H1 (cell line): ENCODE measurements at regions of chr15 and their contacts with region 1.

Region 1: DNA sequence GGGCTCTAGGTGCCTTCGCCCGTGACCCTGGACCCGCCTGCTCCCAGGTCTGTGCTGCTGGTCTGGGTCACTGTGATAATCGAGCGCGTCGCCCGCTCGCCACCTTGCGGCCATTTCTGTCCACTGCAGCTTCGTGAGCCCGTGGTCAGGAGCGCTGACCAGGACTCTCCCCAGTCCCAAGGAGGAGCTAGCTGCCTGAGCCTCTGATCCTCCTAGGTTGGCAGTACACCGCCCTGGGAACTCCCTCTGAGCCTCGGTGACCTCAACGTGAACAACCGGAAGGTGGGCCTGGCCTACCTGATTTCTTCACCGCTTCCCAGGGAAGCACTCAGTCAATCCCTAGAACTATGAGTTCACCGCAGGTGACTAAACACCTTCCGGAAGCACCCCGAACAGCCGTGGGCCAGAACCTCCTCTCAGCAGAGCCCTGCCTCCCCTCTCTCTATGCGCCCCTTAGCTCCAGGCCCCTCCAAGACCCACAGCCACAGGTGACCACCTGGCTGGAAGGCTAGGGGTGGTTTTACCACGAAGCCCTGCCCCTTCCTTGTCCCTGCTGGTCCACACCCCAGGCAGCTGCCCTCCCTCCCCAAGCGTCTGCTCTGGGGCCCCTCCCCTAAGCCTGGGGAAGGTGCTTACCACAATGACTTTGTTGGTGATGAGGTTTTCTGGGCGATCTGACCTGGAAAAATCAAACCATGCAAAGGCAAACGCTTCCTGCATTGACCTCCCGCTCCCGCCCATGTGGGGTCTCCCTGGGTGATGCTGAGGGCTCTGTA is 9.7 kb downstream of the PLA2G4D start:
- DNase-seq: peak; percentile 65 to 91
- H3K4me3 ChIP-seq: no peak overlapping the region
- H3K27ac ChIP-seq: no peak overlapping the region
- H3K4me1 ChIP-seq: peaks cover 6 to 17% (median 11%) of the 10 kb centered on the region in 4 experiments
- H3K27me3 ChIP-seq: no peaks in the 10 kb centered on the region
- CTCF ChIP-seq: peak; percentile 93 to 99 (median 97)
- EP300 ChIP-seq: no peak
- POLR2A ChIP-seq: no peak
- RAD21 ChIP-seq: peak; percentile 88 to 91

Region 2: DNA sequence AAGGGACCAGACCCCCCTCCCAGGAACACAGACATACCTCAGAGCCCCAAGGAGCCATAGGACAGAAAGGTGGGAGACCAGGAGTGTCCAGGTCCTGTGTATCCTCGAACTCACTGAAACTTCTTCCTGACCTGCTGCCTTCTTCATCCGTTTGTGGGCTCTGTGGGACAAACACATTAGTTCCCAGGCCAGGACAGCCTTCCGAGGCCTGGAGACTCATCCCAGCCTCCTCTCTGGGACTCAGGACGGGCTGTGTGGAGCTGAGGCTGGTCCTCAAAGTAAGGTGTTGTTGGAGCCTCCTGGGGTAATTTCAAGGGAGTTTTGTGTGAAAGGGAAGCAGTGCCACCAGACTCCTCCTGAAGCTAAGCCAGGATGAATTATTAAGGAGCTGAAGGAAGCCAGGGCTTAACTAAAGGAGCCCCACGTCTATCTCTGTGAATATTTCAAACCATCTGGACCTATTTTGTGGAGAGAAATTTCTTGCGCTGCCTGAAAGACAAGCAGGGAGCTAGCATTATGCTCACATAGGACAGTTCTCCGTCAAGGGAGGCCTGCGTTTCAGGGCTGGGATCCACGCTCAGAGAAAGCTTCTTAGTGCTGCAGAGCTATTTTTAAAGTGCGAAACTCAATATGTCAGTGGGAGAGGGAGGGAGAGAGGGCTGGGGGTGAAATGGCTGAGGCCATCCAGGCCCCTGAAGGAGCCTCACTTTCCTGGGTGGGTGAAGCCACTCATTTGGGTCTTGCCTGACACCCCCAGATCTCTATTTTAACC is 34.0 kb before region 1 on chr15:
- CTCF ChIA-PET with region 1: interaction called, 28 read pairs
- POLR2A ChIA-PET with region 1: no interaction called
- DNase-seq: peak in 1 of 2 experiments; percentile 28
- H3K4me3 ChIP-seq: no peak overlapping the region
- H3K27ac ChIP-seq: no peak overlapping the region
- H3K4me1 ChIP-seq: peaks cover 0 to 6% (median 3%) of the 10 kb centered on the region in 4 experiments; a peak in 5 of 7 replicates
- H3K27me3 ChIP-seq: no peaks in the 10 kb centered on the region
- CTCF ChIP-seq: no peak
- EP300 ChIP-seq: no peak
- POLR2A ChIP-seq: no peak
- RAD21 ChIP-seq: no peak

Region 3: DNA sequence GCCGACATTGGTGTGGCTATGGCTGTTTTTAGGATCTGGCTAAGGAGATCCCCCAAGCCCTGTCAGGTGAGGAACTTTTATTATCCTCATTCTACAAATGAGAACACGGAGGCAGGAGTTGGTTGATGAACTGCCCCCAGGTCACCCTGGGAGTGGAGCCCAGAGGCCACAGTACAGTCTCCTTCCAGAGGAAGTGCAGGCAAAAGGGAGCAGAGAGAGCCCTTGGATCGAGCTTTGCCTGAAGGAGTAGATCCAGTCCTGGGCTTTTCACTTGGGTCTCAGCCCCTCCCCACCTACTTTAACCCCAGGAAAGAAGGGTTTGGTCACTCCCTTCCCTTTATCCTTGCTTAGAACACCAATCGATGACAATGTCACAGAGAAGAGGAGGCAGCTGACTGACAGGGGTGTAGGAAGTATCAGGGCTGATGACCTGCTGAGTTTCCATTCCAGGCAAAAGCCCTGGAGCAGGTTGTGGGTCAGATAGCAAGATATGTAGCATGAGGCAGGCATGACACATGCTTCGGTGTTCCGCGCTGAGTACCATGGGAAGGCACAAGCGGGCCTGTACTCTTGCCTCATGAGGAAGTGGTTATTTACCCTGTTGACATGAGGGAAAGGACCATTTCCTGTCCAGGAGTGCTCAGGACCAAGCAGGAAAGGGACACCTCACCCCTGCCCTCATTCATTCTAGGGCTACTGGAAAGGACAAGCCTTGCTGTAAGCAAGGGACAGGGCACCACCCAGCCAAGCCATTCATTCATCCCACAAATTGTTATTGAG is 15.6 kb after region 1 on chr15:
- CTCF ChIA-PET with region 1: interaction called, 63 read pairs
- POLR2A ChIA-PET with region 1: interaction called, 4 read pairs
- DNase-seq: no peak
- H3K4me3 ChIP-seq: no peak overlapping the region
- H3K27ac ChIP-seq: no peak overlapping the region
- H3K4me1 ChIP-seq: no peaks in the 10 kb centered on the region; a peak in 1 of 7 replicates
- H3K27me3 ChIP-seq: no peaks in the 10 kb centered on the region; a peak in 1 of 7 replicates
- CTCF ChIP-seq: no peak
- EP300 ChIP-seq: no peak
- POLR2A ChIP-seq: no peak
- RAD21 ChIP-seq: no peak

Region 4: DNA sequence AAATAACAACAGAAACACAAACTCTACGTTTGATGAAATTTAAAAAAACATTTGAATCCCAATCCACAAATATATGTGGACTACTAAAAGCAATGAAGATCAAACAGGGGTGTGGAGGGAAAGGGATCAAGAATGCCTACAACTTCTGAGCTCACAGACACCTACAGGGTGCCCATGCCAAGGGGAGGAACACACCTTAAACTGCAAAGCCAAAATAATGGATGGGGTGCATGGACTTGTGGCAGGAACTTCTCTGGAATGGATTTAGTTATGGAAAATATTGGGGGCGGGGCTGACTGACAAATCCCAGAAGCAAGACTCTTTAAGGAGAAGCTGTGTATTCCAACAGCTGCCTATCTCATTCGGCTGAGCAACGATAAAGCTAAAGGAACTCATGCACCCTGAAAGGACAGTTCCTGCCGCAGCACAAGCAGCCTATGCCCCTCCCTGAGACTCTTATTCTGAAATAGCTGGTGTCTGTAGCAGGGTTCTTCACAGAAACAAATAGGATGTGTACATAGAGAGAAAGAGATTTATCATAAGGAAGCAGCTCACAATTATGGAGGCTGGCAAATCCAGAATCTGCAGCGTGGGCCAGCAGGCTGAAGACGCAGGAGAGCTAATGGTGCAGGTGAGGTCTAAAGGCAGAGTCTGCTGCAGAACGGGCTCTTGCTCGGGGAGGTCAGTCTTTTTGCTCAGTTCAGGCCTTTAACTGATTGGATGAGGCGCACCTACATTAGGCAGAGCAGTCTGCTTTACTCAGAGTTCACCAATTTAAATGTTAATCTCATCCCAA is 34.2 kb after region 1 on chr15:
- CTCF ChIA-PET with region 1: interaction called, 43 read pairs
- POLR2A ChIA-PET with region 1: no interaction called
- DNase-seq: no peak
- H3K4me3 ChIP-seq: no peak overlapping the region; a peak in 1 of 8 replicates
- H3K27ac ChIP-seq: no peak overlapping the region
- H3K4me1 ChIP-seq: peaks cover 0 to 6% (median under 1%) of the 10 kb centered on the region in 4 experiments; a peak in 3 of 7 replicates
- H3K27me3 ChIP-seq: no peaks in the 10 kb centered on the region
- CTCF ChIP-seq: no peak
- EP300 ChIP-seq: no peak
- POLR2A ChIP-seq: no peak
- RAD21 ChIP-seq: no peak

Region 5: DNA sequence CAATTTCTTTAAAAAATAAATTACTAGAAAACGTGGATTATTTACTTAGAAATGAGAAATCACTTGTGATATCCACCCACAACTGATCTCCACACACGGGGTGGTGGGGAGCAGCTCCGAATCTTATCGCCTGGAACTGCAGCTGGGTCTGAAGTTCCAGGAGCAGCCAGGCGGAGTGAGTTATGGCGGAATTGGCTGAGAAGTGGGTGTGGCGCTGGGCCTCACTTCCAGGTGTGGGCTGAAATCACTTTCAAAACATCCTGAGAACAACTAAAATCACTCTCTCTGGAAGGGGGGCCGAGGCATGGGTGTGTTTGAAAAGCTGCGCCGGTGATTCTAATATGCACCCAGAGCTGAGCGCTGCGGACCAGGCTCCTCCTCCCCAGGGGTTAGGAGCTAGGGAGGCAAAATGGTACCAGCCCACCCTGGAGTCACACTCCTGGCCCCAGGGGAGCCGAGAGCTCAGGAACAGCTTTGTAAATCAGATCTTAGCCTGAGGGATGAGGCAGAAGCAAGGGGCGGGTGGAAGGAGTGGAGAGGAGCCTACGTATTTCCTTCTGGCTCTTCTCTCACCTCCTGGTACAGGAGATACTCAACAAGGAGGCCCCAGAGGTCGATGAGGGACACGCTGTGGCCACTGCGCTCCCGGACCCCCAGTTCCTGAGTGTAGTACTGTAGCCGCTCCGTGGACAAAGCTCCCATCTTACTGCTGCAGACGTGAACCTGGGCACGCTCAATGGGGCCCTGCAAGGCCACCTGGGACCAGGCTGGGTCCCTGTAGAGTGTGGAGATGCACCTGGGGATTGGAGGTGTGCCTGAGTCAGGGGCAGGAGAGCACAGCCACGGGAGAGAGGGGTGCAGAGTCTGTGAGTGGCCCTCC is 62.1 kb after region 1 on chr15:
- CTCF ChIA-PET with region 1: interaction called, 276 read pairs
- POLR2A ChIA-PET with region 1: no interaction called
- DNase-seq: no peak
- H3K4me3 ChIP-seq: no peak overlapping the region
- H3K27ac ChIP-seq: no peak overlapping the region
- H3K4me1 ChIP-seq: peaks cover 0 to 3% (median 0%) of the 10 kb centered on the region in 4 experiments; a peak in 1 of 7 replicates
- H3K27me3 ChIP-seq: no peaks in the 10 kb centered on the region
- CTCF ChIP-seq: no peak
- EP300 ChIP-seq: no peak
- POLR2A ChIP-seq: no peak
- RAD21 ChIP-seq: no peak